HEK293 (cell line): ENCODE measurements at regions of chr9 and their contacts with region 1.

Region 1: GRCh38 chr9:134099123-134099787 is 31.4 kb upstream of the BRD3 start:
- H3K4me3 ChIP-seq: no peak overlapping the region
- H3K27ac ChIP-seq: no peak overlapping the region
- H3K4me1 ChIP-seq: no peaks in the 10 kb centered on the region
- CTCF ChIP-seq: peak; percentile 71

Region 2: DNA sequence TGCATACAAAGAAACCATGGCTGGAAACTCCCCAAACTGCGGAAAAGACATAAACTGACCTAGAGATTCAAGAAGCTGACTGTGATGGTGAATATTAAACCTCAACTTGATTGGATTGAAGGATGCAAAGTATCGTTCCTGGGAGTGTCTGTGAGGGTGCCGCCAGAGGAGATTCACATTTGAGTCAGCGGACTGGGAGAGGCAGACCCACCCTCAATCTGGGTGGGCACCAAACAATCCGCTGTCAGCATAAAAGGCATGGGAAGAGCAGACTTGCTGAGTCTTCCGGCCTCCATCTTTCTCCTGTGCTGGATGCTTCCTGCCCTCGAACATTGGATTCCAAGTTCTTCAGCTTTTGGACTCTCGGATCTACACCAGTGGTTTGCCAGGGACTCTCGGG is 11.8 kb after region 1 on chr9:
- CTCF ChIA-PET with region 1: interaction called, 25 read pairs
- POLR2A ChIA-PET with region 1: no interaction called
- H3K4me3 ChIP-seq: no peak overlapping the region
- H3K27ac ChIP-seq: no peak overlapping the region
- H3K4me1 ChIP-seq: no peaks in the 10 kb centered on the region
- CTCF ChIP-seq: no peak